GM12878 (cell line): ENCODE measurements at regions of chr14 and their contacts with region 1.

Region 1: DNA sequence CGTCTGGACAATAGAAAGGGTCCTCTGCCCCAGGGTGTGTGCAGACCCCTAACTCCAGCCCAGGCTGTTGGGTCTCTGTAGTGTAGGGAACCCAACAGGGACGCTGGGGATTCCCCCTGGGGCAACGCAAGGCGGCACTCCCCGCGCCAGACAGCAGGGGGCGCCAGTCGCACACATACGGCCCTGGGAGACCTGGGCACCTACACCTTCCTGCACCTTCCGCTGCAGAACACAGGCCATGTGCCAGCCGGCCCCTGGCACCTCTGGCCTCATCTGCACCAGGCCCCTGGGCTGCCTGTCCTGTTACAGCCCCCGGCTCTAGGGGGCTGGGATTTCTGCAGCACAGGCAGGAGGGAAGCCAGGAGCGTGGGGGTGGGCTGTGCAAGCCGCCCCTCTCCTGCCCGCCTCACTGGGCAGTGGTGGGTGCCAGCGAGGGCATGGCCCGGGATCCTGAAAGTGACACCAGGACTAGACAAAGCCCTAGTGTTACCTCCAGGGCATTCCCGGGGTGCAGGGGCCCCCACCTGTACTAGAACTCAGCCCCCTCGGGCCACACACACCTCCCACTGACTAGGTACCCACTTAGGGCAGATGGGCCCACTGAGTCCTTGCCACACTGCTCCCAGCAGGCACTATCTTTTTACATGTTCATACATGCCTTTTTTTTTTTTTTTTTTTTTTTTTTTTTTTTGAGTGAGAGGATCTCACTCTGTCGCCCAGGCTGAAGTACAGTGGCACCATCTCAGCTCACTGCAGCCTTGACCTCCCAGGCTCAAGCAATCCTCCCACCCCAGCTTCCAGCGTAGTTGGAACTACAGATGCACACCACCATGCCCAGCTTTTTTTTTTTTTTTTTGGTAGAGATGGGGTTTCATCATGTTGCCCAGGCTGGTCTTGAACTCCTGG is 37.5 kb downstream of the CCNK start:
- DNase-seq: no peak
- ATAC-seq: peak; percentile 91
- H3K4me3 ChIP-seq: no peak overlapping the region
- H3K27ac ChIP-seq: no peak overlapping the region
- H3K4me1 ChIP-seq: no peaks in the 10 kb centered on the region
- H3K27me3 ChIP-seq: no peaks in the 10 kb centered on the region
- CTCF ChIP-seq: peak; percentile 96 to 99 (median 96)
- EP300 ChIP-seq: no peak
- POLR2A ChIP-seq: no peak
- RAD21 ChIP-seq: peak; percentile 84

Region 2: DNA sequence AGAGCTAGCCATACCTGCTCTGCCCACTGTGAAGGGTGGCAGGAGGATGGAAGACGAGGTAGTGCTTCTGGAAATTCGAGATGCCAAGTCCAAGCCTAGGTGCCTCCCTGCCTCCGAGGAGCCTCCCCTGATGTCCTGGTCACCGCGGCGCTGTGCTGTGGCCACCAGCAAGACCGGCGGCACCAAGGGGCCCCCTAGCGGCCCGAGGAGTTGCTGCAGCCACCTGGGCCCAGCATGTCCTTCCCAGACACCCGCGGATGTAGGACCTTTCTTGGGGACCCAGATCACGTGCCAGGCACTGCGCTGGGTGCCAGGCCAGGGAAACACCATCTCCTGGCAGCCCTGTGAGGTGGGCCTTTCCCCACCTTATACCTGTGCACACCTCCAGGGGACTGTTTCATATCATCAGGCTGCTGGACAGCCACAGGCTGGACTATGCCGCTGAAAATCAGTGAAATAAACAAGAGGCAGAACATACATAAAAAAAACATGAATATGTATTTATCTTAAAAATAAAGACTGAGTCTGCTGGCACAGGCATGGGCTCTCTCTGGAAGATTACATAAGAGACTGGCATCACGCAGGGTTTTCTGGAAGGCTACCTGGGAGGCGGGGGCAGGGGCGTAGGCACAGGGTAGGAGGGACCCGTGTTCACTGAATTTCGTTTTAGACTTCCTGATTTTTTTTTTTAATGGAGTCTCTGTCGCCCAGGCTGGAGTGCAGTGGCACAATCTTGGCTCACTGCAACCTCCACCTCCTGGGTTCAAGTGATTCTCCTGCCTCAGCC is 110.3 kb after region 1 on chr14:
- CTCF ChIA-PET with region 1: interaction called, 10 read pairs
- POLR2A ChIA-PET with region 1: interaction called, 5 read pairs
- RAD21 ChIA-PET with region 1: interaction called, 7 read pairs
- SMC1A ChIA-PET with region 1: interaction called, 4 read pairs
- in situ Hi-C with region 1: loop called (anchors 5 kb)
- intact Hi-C with region 1: loop called (anchors 1 kb)
- DNase-seq: no peak
- ATAC-seq: peak; percentile 94
- H3K4me3 ChIP-seq: no peak overlapping the region
- H3K27ac ChIP-seq: no peak overlapping the region
- H3K4me1 ChIP-seq: no peaks in the 10 kb centered on the region
- H3K27me3 ChIP-seq: no peaks in the 10 kb centered on the region; a peak in 1 of 4 replicates
- CTCF ChIP-seq: peak; percentile 92 to 99 (median 97); a peak in 5 of 6 replicates
- EP300 ChIP-seq: no peak
- POLR2A ChIP-seq: no peak
- RAD21 ChIP-seq: peak; percentile 87

Region 3: GRCh38 chr14:99891900-99892299 is 373.2 kb after region 1 on chr14:
- CTCF ChIA-PET with region 1: no interaction called
- POLR2A ChIA-PET with region 1: no interaction called
- RAD21 ChIA-PET with region 1: no interaction called
- SMC1A ChIA-PET with region 1: no interaction called
- in situ Hi-C with region 1: no loop called
- intact Hi-C with region 1: loop called (anchors 2 kb)
- DNase-seq: no peak
- ATAC-seq: peak; percentile 88
- H3K4me3 ChIP-seq: no peak overlapping the region
- H3K27ac ChIP-seq: no peak overlapping the region
- H3K4me1 ChIP-seq: no peaks in the 10 kb centered on the region
- H3K27me3 ChIP-seq: peaks cover 0 to 1% of the 10 kb centered on the region in 2 experiments; a peak in 2 of 4 replicates
- CTCF ChIP-seq: no peak
- EP300 ChIP-seq: no peak
- POLR2A ChIP-seq: no peak
- RAD21 ChIP-seq: no peak